Activated CD4-positive, alpha-beta T cell treated with anti-CD3 and anti-CD28 coated beads, Interleukin-2, amount 10 ng/mL, durations not matched to agents 7 days and 5 days (primary cell): ENCODE measurements at regions of chr13 and their contacts with region 1.

Region 1: GRCh38 chr13:45310341-45311125 is 30.4 kb downstream of the TPT1 start:
- DNase-seq: no peak
- H3K4me3 Mint-ChIP-seq: peak overlapping the region; percentile 73
- H3K27ac Mint-ChIP-seq: no peak overlapping the region
- H3K4me1 Mint-ChIP-seq: peaks cover 21% of the 10 kb centered on the region
- H3K27me3 Mint-ChIP-seq: peaks cover 22% of the 10 kb centered on the region

Region 2: GRCh38 chr13:45047394-45048310 is 262.9 kb before region 1 on chr13:
- CTCF ChIA-PET with region 1: interaction called, 16 read pairs
- POLR2A ChIA-PET with region 1: no interaction called
- DNase-seq: peak; percentile 82
- H3K4me3 Mint-ChIP-seq: peak overlapping the region; percentile 69
- H3K27ac Mint-ChIP-seq: no peak overlapping the region
- H3K4me1 Mint-ChIP-seq: peaks cover 26% of the 10 kb centered on the region
- H3K27me3 Mint-ChIP-seq: peaks cover 28% of the 10 kb centered on the region

Region 3: GRCh38 chr13:45297456-45298205 is 12.9 kb before region 1 on chr13:
- CTCF ChIA-PET with region 1: interaction called, 13 read pairs
- POLR2A ChIA-PET with region 1: no interaction called
- DNase-seq: peak; percentile 56
- H3K4me3 Mint-ChIP-seq: peak overlapping the region; percentile 12
- H3K27ac Mint-ChIP-seq: peak overlapping the region; percentile 85
- H3K4me1 Mint-ChIP-seq: peaks cover 34% of the 10 kb centered on the region
- H3K27me3 Mint-ChIP-seq: peaks cover under 1% of the 10 kb centered on the region